Aorta (tissue), 5 donors: ENCODE measurements at regions of chr2 and their contacts with region 1.

Region 1: DNA sequence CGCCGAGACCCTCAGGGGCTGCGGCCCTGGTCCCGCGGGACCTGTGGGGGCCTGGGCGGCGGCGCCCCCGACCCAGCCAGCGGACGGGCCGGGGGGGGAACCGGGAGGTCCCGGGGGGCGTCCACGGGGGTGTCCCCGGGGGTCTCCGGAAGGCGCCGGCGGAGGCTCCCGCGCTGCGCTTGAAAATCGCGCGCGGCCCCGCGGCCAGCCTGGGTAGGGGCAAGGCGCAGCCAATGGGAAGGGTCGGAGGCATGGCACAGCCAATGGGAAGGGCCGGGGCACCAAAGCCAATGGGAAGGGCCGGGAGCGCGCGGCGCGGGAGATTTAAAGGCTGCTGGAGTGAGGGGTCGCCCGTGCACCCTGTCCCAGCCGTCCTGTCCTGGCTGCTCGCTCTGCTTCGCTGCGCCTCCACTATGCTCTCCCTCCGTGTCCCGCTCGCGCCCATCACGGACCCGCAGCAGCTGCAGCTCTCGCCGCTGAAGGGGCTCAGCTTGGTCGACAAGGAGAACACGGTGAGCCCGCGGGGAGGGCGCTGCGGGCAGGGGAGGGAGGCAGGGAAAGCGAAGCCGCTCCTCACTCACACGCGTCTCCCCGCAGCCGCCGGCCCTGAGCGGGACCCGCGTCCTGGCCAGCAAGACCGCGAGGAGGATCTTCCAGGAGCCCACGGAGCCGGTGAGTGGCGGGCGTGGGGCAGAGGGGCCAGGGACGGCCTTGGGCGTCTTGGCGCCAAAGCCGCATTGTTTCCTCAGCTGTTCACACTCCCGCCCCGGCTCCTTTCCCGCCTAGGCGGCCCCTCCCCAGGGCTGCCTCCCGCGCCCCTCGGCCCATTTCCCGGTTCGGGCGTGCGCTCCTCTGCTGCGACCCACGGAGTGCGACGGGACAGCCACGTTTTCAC is at the start of gene RRM2:
- DNase-seq: peak; percentile 95
- ATAC-seq: peak; percentile 93
- H3K4me3 ChIP-seq: peak within 1 kb of the TSS; percentile 28 to 30
- H3K27ac ChIP-seq: no peak within 1 kb of the TSS
- H3K4me1 ChIP-seq: no peaks in the 10 kb centered on the region
- H3K27me3 ChIP-seq: no peaks in the 10 kb centered on the region
- total RNA-seq, gene RRM2: 1.8 to 4.3 TPM

Region 2: GRCh38 chr2:10079870-10080535 is 42.6 kb before region 1 on chr2 and contains the start of gene CYS1:
- intact Hi-C with region 1: loop called in 1 of 2 experiments (anchors 5 kb)
- DNase-seq: peak in 1 of 2 donors; percentile 83
- ATAC-seq: peak; percentile 47
- H3K4me3 ChIP-seq: peak within 1 kb of the TSS; percentile 76 to 96
- H3K27ac ChIP-seq: peak within 1 kb of the TSS; percentile 67 to 85
- H3K4me1 ChIP-seq: no peaks in the 10 kb centered on the region
- H3K27me3 ChIP-seq: no peaks in the 10 kb centered on the region
- total RNA-seq, gene CYS1: 11.4 to 13.9 TPM

Region 3: DNA sequence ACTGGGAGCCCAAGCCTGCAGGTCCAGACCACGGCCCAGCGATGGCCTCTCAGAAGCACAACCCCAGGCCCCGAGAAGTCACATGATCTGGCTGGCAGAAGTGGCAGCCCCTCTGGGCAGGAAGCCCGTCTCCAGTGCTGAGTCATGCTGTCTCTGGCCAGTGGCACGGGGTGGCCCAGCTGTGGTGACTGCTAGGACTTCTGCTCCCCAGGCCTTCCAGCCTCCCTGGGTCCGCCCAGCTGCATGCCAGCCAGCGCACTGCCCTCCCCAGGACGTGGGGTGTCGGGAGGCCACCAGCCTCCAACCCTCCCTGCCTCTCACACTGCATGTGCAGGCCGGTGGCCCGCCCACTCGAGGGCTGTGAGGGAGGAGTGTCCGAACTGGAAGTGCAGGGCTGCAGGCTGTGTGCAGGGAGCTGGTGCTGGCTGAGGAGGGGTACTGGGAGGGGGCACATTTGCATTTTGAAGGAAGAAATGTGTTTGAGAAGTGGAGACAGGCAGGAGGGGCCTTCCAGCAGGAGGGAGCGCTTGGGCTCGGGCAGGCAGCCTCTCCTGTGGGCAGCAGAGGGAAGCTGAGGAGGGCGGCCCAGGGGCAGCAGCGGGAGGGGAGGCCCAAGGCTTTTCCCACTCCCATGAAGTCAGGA is 163.0 kb after region 1 on chr2:
- intact Hi-C with region 1: loop called in 1 of 2 experiments (anchors 10 kb)
- DNase-seq: peak; percentile 93 to 97
- ATAC-seq: peak; percentile 90
- H3K4me3 ChIP-seq: no peak overlapping the region
- H3K27ac ChIP-seq: peak overlapping the region in 1 of 2 donors; percentile 92
- H3K4me1 ChIP-seq: no peaks in the 10 kb centered on the region
- H3K27me3 ChIP-seq: no peaks in the 10 kb centered on the region

Region 4: DNA sequence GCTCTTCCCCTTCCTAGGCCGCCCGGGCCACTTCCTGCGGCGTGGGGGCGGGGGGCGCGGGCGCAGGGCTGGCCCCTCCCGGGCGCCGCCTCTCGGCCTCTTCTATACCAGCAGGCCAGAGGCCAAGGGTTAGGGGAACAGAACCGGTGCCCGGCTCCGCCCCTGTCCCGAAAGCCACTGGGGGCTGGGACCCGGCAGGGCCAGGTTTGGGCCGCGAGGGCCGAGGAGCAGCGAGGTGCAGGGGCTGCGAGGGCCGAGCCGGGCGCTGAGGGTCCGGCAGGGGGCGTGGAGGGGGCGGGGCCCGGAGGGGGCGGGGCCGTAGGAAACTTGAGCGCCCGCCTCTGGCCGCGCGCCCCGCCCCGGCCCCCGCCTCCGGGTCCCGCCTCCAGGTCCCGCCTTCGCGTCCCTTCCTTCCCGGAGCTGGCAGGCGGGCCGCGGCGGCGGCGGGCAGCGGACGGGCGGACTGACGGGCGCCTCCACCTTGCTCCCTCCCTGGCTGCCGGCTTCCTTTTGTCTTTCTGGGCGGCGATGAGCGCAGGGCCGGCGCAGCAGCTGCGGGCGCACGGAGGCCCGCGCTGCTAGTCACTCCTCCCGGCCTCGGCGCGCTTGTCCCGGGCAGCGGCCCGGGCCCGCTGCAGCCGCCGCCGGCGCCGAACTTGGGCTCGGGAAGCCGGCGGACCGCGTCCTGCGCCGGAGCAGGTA is 180.0 kb after region 1 on chr2 and contains the start of gene HPCAL1:
- intact Hi-C with region 1: loop called in 1 of 2 experiments (anchors 5 kb)
- DNase-seq: peak; percentile 93 to 95
- ATAC-seq: peak; percentile 94
- H3K4me3 ChIP-seq: peak within 1 kb of the TSS; percentile 66 to 91
- H3K27ac ChIP-seq: peak within 1 kb of the TSS in 1 of 2 donors; percentile 45
- H3K4me1 ChIP-seq: no peaks in the 10 kb centered on the region
- H3K27me3 ChIP-seq: no peaks in the 10 kb centered on the region
- total RNA-seq, gene HPCAL1: 21.4 to 28.1 TPM

Region 5: GRCh38 chr2:10408649-10409579 is 286.3 kb after region 1 on chr2:
- intact Hi-C with region 1: loop called (anchors 2 kb)
- DNase-seq: peak; percentile 79 to 89
- ATAC-seq: peak; percentile 76
- H3K4me3 ChIP-seq: no peak overlapping the region
- H3K27ac ChIP-seq: no peak overlapping the region
- H3K4me1 ChIP-seq: peaks cover 0 to 4% of the 10 kb centered on the region in 2 donors
- H3K27me3 ChIP-seq: no peaks in the 10 kb centered on the region

Region 6: GRCh38 chr2:10434886-10435819 is 312.5 kb after region 1 on chr2:
- intact Hi-C with region 1: loop called (anchors 2 kb)
- DNase-seq: peak; percentile 81 to 92
- ATAC-seq: peak; percentile 84
- H3K4me3 ChIP-seq: no peak overlapping the region
- H3K27ac ChIP-seq: no peak overlapping the region
- H3K4me1 ChIP-seq: no peaks in the 10 kb centered on the region
- H3K27me3 ChIP-seq: no peaks in the 10 kb centered on the region

Region 7: GRCh38 chr2:10659898-10660568 is 537.4 kb after region 1 on chr2:
- intact Hi-C with region 1: loop called in 1 of 2 experiments (anchors 10 kb)
- DNase-seq: no peak
- ATAC-seq: no peak
- H3K4me3 ChIP-seq: no peak overlapping the region
- H3K27ac ChIP-seq: no peak overlapping the region
- H3K4me1 ChIP-seq: no peaks in the 10 kb centered on the region
- H3K27me3 ChIP-seq: no peaks in the 10 kb centered on the region